ENCODE measurements at regions of chr14 and their contacts with region 1.

Region 1: DNA sequence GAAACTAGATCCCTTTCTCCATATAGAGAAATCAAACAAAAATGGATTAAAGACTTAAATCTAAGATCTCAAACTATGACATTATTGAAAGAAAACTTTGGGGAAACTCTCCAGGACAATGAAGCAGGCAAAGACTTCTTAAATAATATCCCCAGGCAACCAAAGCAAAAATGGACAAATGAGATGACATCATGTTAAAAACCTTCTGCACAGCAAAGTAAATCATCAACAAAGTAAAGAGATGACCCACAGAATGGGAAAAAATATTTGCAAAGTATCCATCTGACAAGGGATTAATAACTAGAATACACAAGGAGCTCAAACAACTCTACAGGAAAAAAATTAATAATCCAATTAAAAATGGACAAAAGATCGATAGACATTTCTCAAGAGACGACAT is 101.0 kb downstream of the RALGAPA1 start:
- DNase-seq: no peak
- ATAC-seq: no peak
- H3K4me3 ChIP-seq: no peak overlapping the region
- H3K27ac ChIP-seq: no peak overlapping the region
- H3K4me1 ChIP-seq: no peaks in the 10 kb centered on the region
- H3K27me3 ChIP-seq: no peaks in the 10 kb centered on the region
- CTCF ChIP-seq: no peak

Region 2: DNA sequence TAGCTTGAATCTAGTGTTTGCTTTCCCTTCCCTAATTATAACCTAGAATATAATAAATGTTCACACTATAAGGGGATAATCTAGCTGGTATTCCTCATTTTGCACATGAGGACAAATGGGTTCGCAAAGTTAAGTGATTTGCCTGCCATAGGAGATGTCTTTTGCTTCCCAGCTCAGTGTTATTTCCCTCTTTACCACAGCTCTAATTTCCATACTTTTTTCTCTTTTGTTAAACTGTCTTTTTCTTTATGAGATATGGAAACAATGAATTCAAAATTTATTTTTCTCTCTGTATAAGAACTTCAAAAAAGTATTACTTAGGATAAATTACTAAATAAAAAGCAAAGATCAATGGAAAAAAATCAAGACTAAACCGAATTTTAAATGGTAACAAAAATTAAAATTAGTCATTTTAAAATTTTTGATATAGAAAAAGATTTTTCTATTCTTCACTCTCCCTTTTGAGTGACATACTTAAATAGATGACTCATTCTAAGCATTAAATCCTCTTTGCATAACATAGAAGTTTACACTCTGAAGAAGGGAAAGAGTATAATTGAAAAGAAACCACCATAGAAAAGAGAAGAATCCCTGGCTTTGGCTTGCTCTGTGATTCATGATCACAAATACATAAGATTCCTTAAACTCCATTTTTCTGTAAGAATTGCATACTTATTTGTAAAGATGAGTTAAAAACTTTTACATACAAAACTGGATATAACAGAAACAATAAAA is 76.8 kb before region 1 on chr14:
- CTCF ChIA-PET with region 1: no interaction called
- POLR2A ChIA-PET with region 1: no interaction called
- in situ Hi-C with region 1: no loop called
- intact Hi-C with region 1: loop called (anchors 2 kb)
- DNase-seq: no peak
- ATAC-seq: no peak
- H3K4me3 ChIP-seq: no peak overlapping the region
- H3K27ac ChIP-seq: no peak overlapping the region
- H3K4me1 ChIP-seq: no peaks in the 10 kb centered on the region
- H3K27me3 ChIP-seq: no peaks in the 10 kb centered on the region
- CTCF ChIP-seq: no peak